SK-N-SH (cell line): ENCODE measurements at regions of chr5 and their contacts with region 1.

Region 1: DNA sequence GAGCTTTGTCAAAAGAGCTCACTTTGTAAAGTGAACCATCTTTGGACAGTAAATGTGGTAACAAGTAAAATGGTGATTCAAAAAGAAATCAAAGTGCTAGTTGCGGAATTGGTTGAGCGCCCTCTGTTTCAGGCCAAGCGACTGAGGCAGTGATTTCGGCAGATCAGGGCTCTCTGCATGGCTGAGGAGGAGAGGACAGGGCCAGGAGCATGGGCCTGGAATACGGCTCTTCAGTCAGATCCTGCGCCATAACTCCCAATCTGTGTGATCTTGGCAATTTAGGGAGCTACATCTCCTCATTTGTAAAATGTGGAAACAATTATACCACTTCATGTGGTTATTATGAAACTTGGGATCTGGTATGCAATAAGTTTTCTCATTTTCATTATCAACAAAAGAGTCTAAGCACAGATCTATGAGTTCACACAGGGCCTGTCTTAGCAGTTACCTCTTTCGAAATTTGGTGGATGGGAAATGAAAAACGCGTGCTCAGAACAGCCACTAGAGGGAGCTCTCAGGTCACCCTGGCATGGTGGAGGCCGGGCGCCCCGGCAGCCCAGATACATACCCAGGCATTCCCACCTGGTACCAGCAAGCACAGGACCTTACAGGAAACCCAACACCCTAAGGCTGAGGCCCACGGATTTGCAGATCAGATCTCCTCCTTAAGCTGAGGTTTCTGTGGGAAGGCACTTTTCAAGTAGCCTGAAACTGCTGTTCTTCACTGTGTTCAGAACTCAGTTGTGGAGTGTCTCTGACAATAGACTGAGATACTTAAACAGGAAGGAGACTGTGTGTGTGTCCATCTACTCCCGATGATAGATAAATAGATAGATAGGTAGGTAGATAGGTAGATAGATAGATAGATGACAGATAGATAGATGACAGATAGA is 303.7 kb downstream of the RAB3C start:
- DNase-seq: peak; percentile 72
- H3K4me3 ChIP-seq: no peak overlapping the region; a peak in 1 of 4 replicates
- H3K27ac ChIP-seq: no peak overlapping the region
- H3K4me1 ChIP-seq: peaks cover 0 to 7% of the 10 kb centered on the region in 2 experiments; a peak in 1 of 4 replicates
- H3K27me3 ChIP-seq: no peaks in the 10 kb centered on the region
- CTCF ChIP-seq: peak; percentile 94
- EP300 ChIP-seq: no peak
- RAD21 ChIP-seq: peak; percentile 82

Region 2: DNA sequence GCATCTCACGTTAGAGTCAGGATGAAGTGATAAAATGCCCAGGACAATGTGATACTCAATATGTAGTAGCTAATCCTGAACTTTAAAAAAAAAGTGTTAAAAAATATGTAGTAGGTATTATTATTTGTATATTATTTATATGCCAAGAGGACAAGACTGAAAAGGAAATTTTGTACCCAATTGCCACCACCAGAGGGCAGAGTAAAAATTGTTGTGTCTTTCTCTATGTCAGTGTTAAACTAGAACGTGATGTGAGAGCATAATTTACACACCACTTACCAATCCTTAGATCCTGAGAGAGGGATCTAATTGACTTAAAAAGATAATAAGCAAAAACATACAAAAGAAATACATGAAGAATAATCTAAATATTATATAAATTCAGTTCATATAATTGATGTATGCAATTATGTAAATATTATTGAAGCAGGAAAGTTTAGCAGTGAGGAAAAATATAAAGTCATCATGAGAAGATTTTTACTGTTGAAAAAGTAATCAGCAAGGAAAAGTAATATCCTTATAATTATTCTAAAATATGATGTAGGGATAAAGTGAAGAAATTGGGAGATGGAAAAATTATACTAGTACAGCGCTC is 14.8 kb before region 1 on chr5:
- CTCF ChIA-PET with region 1: interaction called, 14 read pairs
- POLR2A ChIA-PET with region 1: no interaction called
- DNase-seq: peak; percentile 26
- H3K4me3 ChIP-seq: no peak overlapping the region; a peak in 1 of 4 replicates
- H3K27ac ChIP-seq: no peak overlapping the region
- H3K4me1 ChIP-seq: peaks cover 0 to 4% of the 10 kb centered on the region in 2 experiments; a peak in 1 of 4 replicates
- H3K27me3 ChIP-seq: no peaks in the 10 kb centered on the region
- CTCF ChIP-seq: peak; percentile 73
- EP300 ChIP-seq: no peak
- RAD21 ChIP-seq: peak; percentile 47

Region 3: DNA sequence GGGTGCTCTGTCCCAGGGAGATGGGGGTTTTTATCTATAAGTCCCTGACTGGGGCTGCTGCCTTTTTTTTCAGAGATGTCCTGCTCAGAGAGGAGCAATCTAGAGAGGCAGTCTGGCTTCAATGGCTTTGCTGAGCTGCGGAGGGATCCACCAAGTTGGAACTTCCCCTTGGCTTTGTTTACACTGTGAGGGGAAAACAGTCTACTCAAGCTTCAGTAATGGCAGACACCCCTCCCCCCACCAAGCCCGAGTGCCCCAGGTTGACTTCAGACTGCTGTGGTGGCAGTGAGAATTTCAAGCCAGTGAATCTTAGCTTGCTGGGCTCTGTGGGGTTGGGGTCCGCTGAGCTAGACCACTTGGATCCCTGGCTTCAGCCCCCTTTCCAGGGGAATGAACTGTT is 72.1 kb after region 1 on chr5:
- CTCF ChIA-PET with region 1: no interaction called
- POLR2A ChIA-PET with region 1: no interaction called
- DNase-seq: no peak
- H3K4me3 ChIP-seq: no peak overlapping the region
- H3K27ac ChIP-seq: no peak overlapping the region
- H3K4me1 ChIP-seq: no peaks in the 10 kb centered on the region
- H3K27me3 ChIP-seq: no peaks in the 10 kb centered on the region
- CTCF ChIP-seq: no peak
- EP300 ChIP-seq: no peak
- RAD21 ChIP-seq: no peak

Region 4: GRCh38 chr5:58999804-59000595 is 113.4 kb after region 1 on chr5:
- CTCF ChIA-PET with region 1: interaction called, 143 read pairs
- POLR2A ChIA-PET with region 1: no interaction called
- DNase-seq: peak; percentile 8
- H3K4me3 ChIP-seq: no peak overlapping the region
- H3K27ac ChIP-seq: peak overlapping the region in 1 of 2 experiments; percentile 28; a peak in 1 of 4 replicates
- H3K4me1 ChIP-seq: peaks cover 0 to 18% of the 10 kb centered on the region in 2 experiments; a peak in 2 of 4 replicates
- H3K27me3 ChIP-seq: no peaks in the 10 kb centered on the region
- CTCF ChIP-seq: no peak
- EP300 ChIP-seq: no peak
- RAD21 ChIP-seq: no peak

Region 5: GRCh38 chr5:59039296-59040023 is 152.9 kb after region 1 on chr5:
- CTCF ChIA-PET with region 1: interaction called, 25 read pairs
- POLR2A ChIA-PET with region 1: no interaction called
- DNase-seq: peak; percentile 87
- H3K4me3 ChIP-seq: peak overlapping the region; percentile 74 to 76
- H3K27ac ChIP-seq: peak overlapping the region; percentile 41 to 50; a peak in 2 of 4 replicates
- H3K4me1 ChIP-seq: peaks cover 26 to 45% of the 10 kb centered on the region in 2 experiments
- H3K27me3 ChIP-seq: no peaks in the 10 kb centered on the region
- CTCF ChIP-seq: no peak
- EP300 ChIP-seq: 0 out of 4 replicates have a peak, but pooled peaks of 1 of the 2 experiments have one; percentile 38
- RAD21 ChIP-seq: no peak